Astrocyte of the cerebellum (primary cell): ENCODE measurements at regions of chr4 and their contacts with region 1.

Region 1: DNA sequence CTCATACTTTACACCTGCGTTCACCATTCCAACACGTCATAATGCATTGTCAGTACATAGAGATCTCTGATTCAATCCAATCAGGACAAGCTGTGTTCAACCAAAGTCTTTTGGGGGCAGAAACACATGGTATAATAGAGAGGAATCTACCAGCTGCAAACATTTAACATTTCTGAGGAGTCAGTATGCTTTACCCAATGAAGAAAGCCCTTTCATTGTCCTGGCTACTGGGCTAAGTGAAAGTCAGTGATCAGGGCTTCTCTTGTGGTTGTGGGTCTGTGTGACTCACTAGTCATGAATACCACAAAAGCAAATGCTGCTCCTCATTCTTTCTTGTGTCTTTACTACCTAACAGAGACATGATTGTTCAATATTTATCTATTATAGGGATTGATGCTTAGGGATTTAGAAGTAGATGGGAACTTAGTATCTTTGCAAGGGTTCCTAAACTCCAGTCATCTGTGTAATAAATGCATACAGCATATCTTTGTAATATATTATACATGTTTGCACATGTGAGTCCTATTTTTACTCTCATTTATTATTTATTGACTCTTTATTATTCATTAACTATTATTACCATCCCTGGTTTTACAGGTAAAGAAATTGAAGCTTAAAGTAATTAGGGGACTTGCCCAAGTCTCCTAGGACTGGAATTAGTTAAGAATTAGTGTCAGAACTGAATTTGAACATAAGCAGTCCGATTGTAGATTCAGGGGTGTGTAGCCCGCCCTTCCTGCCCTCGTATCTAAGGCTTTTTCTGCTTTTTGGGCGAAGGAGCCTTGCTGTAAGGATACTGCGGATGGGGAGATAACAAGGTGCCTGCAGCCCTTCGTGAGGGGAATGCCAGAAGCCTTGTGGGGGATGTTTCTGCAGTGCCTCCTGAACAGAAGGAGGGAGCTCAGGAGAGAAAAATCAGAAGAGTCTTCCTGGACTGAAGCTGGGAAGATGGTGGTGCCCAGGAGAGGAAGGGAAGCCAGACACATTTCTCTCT is 353.1 kb upstream of the BOD1L1 start:
- DNase-seq: peak; percentile 94
- H3K4me3 ChIP-seq: no peak overlapping the region
- CTCF ChIP-seq: no peak

Region 2: DNA sequence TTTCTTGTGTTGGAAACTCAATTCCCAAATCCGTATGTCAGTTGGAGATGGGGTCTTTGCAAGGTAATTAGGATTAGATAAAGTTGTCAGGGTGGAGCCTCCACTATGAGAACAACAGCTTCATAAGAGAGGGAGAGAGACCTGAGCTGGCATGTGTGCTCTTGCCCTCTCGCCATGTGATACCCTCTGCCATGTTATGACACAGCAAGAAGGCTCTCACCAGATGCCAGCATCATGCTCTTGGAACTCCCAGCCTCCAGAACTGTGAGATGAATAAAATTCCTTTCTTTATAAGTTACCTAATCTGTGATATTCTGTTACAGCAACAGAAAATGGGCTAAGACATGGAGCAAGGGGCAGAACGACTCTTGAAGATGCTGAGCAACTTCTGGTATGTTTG is 151.2 kb before region 1 on chr4:
- in situ Hi-C with region 1: no loop called
- DNase-seq: no peak
- H3K4me3 ChIP-seq: no peak overlapping the region
- CTCF ChIP-seq: no peak

Region 3: DNA sequence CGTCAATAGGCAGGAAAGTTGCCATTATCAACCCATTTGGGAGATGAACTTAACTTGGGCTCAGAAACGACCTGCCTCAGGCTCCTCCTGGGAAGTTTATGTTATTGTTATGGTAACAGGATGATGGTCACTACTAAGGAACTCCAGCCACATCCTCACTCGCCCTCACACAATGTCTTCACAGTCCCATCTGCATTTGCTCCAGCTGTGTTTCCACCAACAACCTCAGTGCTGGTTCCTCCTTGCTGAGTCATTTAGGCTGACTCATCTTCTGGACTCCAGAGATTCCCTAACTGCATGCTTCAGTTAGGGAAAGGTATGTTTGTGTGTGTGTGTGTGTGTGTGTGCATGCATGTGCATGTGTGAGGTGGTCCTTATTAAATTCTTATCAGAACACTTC is 59.7 kb before region 1 on chr4:
- in situ Hi-C with region 1: loop called (anchors 5 kb)
- DNase-seq: peak; percentile 99
- H3K4me3 ChIP-seq: no peak overlapping the region
- CTCF ChIP-seq: no peak

Region 4: DNA sequence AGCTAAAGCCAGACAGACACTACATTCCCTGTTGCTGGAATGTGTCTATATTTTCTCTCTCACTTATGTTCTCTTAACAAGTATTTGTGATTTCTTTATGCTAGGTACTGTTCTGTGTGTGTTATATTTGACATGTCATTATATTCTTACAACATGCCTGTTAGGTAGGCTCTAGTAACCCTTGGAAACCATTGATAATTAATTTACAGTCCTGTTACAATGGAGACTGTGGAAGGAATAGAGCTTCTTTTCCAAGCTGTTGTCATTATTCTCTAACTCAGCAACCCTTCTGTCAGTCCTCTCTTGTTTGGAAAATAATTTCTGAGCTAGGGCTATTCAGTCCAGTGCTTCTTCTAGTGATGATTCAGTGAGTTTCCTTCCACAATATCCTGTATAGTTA is 66.0 kb after region 1 on chr4:
- in situ Hi-C with region 1: loop called (anchors 10 kb)
- DNase-seq: no peak
- H3K4me3 ChIP-seq: no peak overlapping the region
- CTCF ChIP-seq: no peak